MCF 10A (cell line): ENCODE measurements at regions of chr19 and their contacts with region 1.

Region 1: DNA sequence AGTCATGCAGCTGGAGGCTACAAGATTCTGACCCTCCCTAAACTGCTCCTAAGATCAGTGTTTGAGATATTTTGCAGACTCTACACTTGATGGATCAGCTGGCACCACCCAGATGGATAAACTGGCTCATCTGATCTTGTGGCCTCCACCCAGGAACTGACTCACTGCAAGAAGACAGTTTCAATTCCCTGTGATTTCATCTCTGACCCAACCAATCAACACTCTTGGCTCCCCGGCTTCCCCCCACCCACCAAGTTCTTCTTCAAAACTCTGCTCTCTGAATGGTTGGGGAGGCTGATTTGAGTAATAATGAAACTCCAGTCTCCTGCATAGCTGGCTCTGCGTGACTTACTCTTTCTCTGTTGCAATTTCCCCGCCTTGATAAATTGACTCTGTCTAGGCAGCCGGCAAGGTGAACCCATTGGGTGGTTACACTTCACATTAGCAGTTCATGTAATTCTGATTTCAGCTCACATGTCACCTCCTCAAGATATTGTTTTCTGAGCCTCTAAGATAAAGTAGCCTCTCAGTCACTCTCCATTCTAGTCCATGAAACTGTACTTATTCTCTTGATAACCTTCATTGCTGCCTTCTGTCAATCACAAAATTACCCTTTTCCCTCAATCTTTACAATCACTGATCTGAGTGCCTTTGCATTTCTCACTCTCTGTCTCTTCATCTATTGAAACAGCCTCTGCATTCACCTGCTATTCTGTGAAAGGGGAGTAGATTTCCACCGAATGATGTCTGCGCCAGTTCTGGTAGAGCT is 9.9 kb upstream of the FPR3 start:
- DNase-seq: peak; percentile 90
- H3K4me3 Mint-ChIP-seq: no peak overlapping the region
- H3K27ac Mint-ChIP-seq: no peak overlapping the region
- H3K4me1 Mint-ChIP-seq: peaks cover 5% of the 10 kb centered on the region
- H3K27me3 Mint-ChIP-seq: no peaks in the 10 kb centered on the region
- CTCF ChIP-seq: no peak

Region 2: GRCh38 chr19:51016798-51017683 is 768.1 kb before region 1 on chr19:
- CTCF ChIA-PET with region 1: no interaction called
- POLR2A ChIA-PET with region 1: no interaction called
- intact Hi-C with region 1: loop called (anchors 10 kb)
- DNase-seq: no peak
- H3K4me3 Mint-ChIP-seq: peak overlapping the region; percentile 3
- H3K27ac Mint-ChIP-seq: no peak overlapping the region
- H3K4me1 Mint-ChIP-seq: peaks cover 7% of the 10 kb centered on the region
- H3K27me3 Mint-ChIP-seq: peaks cover 40% of the 10 kb centered on the region
- CTCF ChIP-seq: peak; percentile 59

Region 3: DNA sequence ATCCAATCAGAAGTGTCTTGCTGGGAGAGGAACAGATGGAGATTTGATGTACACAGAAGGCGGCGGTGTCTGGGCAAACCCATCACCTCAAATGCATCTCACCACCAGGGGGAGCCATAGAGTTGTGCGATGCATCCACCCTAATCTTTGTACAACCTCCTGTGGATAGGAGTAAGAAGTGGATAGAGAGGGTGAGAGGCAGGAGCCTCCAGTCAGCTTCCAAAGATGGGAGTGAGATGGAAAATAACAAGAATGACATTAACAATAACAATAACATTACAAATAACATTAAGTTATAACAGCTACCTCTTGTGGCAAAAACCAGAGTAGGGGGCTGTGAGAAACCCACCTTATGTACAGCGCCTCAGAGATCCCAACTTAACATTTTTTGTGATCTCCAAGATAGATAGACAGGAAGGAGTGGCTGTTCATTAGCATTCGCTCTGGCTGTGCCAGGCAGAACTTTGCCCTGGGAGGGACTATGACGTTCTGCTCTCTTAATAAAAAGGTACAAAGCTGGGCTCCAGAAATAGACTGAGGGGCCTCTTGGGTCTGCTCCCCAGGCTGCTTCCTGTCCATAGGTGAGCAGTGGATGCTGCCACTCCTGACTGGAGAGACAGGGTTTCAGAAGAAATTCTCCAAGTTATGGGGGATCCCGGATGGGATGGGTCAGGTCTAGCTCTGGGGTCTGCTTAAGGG is 311.9 kb before region 1 on chr19:
- CTCF ChIA-PET with region 1: interaction called, 3 read pairs
- POLR2A ChIA-PET with region 1: no interaction called
- intact Hi-C with region 1: loop called (anchors 2 kb)
- DNase-seq: peak; percentile 76
- H3K4me3 Mint-ChIP-seq: no peak overlapping the region
- H3K27ac Mint-ChIP-seq: no peak overlapping the region
- H3K4me1 Mint-ChIP-seq: no peaks in the 10 kb centered on the region
- H3K27me3 Mint-ChIP-seq: no peaks in the 10 kb centered on the region
- CTCF ChIP-seq: peak; percentile 89

Region 4: DNA sequence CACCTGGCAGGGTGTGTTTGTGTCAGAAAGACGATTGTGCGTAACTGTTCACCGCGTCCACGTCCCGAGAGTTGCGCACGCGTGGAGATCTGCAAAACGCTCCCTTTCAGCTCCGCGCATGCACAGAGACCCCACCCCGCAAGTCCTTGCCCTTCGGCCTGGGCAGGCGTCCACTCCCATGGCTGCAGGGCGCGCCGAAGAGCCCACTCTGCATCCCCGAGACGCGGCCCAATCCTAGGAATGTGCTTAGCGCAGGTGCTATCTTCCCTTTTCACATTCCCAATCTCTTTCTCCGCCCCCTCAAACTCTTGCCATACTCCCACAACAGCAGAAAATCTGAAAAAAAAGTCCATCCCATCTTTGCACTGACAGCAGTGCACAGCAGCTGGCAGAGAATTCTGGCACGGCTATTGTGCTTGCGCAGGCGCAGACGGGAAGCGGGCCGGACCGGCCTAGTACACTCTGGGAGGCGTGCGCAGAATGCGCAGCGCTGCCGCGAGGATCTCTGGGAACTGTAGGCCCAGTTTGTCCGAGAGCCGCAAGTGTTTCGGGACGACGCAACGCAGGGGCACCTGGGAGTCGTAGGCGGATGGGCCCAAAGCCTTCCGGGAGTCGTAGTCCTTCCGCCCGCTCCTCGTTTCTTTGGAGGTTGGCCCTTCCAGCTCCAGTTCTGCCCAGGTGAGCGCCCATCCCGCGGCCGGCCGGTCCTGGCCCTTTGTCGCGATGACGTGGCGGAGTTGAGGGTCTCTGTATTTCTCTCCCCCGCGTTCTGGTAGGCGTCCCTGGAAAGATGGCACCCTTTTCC is 190.9 kb before region 1 on chr19:
- CTCF ChIA-PET with region 1: no interaction called
- POLR2A ChIA-PET with region 1: no interaction called
- intact Hi-C with region 1: loop called (anchors 5 kb)
- DNase-seq: peak; percentile 98
- H3K4me3 Mint-ChIP-seq: peak overlapping the region; percentile 86
- H3K27ac Mint-ChIP-seq: peak overlapping the region; percentile 52
- H3K4me1 Mint-ChIP-seq: peaks cover 20% of the 10 kb centered on the region
- H3K27me3 Mint-ChIP-seq: no peaks in the 10 kb centered on the region
- CTCF ChIP-seq: no peak

Region 5: GRCh38 chr19:51698241-51698651 is 86.9 kb before region 1 on chr19:
- CTCF ChIA-PET with region 1: no interaction called
- POLR2A ChIA-PET with region 1: no interaction called
- intact Hi-C with region 1: no loop called
- DNase-seq: no peak
- H3K4me3 Mint-ChIP-seq: no peak overlapping the region
- H3K27ac Mint-ChIP-seq: no peak overlapping the region
- H3K4me1 Mint-ChIP-seq: peaks cover 30% of the 10 kb centered on the region
- H3K27me3 Mint-ChIP-seq: no peaks in the 10 kb centered on the region
- CTCF ChIP-seq: no peak

Region 6: DNA sequence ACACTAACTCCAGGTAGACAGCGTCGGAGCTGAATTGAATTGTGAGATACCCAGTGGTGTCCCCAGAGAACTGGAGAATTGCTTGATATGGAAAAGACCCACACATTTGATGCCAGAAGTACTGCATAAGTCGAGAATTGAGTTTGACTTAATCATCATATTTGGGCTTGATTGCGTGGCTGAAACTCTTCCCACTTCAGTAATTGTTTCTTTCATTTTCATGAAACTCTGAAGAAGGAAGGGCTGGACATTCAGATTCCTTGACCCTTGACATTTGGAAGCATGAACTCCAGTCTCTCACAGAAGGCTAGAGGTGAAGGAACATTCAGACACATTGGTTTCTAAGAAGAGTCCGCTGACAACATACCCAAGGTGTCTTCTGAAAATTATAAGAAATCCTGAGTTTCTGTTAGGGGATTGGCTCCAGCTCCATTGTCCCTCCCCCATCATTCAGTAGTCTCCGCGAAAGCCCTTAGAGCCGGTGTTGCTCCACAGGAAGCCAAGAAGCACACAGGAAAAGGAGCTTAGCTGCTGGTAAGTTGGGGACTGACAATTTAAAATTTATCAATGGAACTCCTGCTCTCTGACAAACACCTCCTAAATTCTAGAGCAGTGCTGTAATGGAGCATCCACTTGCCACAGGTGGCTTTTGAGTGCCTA is 24.3 kb before region 1 on chr19 and contains the start of gene FPR2:
- CTCF ChIA-PET with region 1: no interaction called
- POLR2A ChIA-PET with region 1: no interaction called
- intact Hi-C with region 1: no loop called
- DNase-seq: no peak
- H3K4me3 Mint-ChIP-seq: no peak within 1 kb of the TSS
- H3K27ac Mint-ChIP-seq: no peak within 1 kb of the TSS
- H3K4me1 Mint-ChIP-seq: peaks cover 8% of the 10 kb centered on the region
- H3K27me3 Mint-ChIP-seq: peaks cover 16% of the 10 kb centered on the region
- CTCF ChIP-seq: no peak
- total RNA-seq, gene FPR2: not detected in 2 replicates

Region 7: DNA sequence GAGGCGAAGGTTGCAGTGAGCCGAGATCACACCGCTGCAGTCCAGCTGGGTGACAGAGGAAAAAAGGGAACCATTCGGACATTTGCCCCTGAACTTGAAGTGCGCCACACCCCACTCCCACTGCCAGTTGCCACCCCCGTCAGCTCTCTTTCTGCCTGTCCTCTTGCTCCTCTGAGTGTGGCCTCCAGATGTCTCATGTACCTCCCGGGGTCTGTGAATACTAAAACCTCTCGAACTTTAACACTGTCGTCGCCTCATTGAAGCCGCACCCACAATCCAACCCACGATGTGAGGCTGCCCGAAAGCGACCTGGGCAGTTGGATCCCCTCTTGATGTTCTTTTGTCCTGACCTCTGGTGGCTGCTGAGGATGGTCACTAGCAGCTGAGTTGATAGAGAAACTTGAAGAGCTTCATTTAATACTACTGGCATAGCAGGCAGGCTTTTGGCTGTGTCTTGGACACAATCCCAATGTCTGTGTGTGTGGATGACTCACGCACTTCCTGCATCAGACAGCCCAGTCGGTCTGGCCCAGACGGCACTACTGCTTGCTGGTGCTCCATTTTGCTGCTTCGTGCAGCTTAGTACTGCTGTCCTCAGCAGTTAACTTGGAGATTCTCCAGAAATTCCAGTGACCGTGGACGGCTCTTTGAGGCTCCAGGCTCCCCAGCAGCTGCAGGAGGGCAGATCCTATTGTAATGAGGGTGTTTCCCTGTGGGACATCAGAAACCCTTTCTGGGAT is 14.1 kb after region 1 on chr19:
- CTCF ChIA-PET with region 1: interaction called, 3 read pairs
- POLR2A ChIA-PET with region 1: interaction called, 12 read pairs
- intact Hi-C with region 1: no loop called
- DNase-seq: peak; percentile 93
- H3K4me3 Mint-ChIP-seq: peak overlapping the region; percentile 2
- H3K27ac Mint-ChIP-seq: peak overlapping the region; percentile 43
- H3K4me1 Mint-ChIP-seq: peaks cover 16% of the 10 kb centered on the region
- H3K27me3 Mint-ChIP-seq: no peaks in the 10 kb centered on the region
- CTCF ChIP-seq: no peak

Region 8: DNA sequence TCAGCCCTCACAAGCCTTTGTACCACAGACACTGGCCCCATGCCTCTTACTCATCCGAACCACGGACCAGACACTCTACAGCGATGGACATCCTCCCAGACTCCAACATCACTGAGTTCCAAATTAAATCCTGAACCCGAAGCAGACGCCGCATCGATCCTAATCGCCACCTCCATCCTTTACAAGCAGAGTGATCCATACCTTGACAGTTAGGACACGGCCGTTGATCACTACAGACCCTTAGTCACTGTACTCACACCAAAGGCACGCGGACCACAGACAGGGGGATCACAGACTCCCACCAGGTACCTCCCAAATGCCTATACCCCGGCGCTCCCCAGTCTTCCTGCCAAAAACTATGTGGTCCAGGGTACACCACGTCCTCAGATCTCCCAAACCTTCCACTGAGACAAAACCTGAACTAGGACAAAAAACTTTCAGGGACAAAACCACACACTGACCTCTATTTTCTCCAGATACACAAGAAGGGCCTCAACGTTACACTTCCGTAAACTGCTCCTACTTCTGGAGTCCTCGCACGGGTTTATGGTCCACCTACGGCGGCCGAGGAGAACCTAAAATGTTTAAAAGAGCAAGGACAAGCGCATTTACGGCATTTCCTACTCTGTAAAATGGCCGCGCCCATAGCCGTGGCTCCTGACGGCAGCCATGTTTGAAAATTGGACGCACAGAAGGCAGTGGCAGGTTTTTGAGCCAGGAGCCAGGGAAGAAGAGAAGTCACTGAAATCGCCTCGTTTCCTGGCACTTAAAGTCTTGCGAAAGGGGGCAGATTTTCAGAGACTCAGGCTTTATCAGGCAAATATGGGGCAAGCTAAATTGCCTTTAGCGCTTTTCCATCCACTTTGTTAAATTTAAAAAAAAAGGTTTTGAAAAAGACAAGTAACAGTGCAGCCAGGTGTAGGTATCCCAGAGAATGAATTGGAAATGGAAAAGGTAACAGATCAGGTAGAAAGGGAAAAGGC is 201.5 kb after region 1 on chr19 and contains the start of gene ZNF350:
- CTCF ChIA-PET with region 1: no interaction called
- POLR2A ChIA-PET with region 1: no interaction called
- intact Hi-C with region 1: no loop called
- DNase-seq: peak; percentile 94
- H3K4me3 Mint-ChIP-seq: peak within 1 kb of the TSS; percentile 88
- H3K27ac Mint-ChIP-seq: peak within 1 kb of the TSS; percentile 96
- H3K4me1 Mint-ChIP-seq: no peaks in the 10 kb centered on the region
- H3K27me3 Mint-ChIP-seq: no peaks in the 10 kb centered on the region
- CTCF ChIP-seq: no peak
- total RNA-seq, gene ZNF350: 7.0 and 8.9 TPM in 2 replicates

Region 9: DNA sequence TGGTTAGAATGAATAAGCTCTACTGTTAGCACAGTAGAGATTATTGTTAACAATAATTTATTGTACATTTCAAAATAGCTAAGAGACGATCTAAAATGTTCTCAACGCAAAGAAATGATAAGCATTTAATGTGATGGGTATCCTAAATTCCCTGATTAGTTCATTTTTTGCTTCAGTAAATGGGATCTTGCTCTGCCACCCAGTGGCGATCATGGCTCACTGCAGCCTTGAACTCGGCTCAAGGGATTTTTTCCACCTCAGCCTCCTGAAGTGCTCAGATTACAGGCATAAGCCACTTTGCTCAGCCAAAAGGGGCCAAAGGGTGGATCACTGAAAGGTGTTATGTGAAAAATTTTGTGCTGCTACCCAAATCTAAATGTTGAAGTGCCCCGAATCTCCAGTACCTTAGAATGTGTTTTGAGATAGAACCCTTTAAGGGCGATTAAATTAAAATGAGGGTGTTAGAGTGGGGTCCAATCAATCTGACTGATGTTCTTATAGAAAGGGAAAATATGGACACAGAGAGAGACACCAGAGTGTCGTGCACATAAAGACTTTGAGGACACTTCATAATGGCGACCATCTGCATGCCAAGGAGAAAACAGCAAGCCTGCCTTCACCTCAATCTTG is 452.8 kb after region 1 on chr19:
- CTCF ChIA-PET with region 1: no interaction called
- POLR2A ChIA-PET with region 1: no interaction called
- intact Hi-C with region 1: loop called (anchors 1 kb)
- DNase-seq: peak; percentile 68
- H3K4me3 Mint-ChIP-seq: no peak overlapping the region
- H3K27ac Mint-ChIP-seq: no peak overlapping the region
- H3K4me1 Mint-ChIP-seq: no peaks in the 10 kb centered on the region
- H3K27me3 Mint-ChIP-seq: no peaks in the 10 kb centered on the region
- CTCF ChIP-seq: peak; percentile 72